ENCODE measurements at regions of chr2 and their contacts with region 1.

Region 1: GRCh38 chr2:219278655-219279516 is at the start of gene DNAJB2:
- DNase-seq: peak; percentile 93 to 97 (median 95)
- ATAC-seq: peak; percentile 86
- H3K4me3 ChIP-seq: peak within 1 kb of the TSS; percentile 34
- H3K27ac ChIP-seq: peak within 1 kb of the TSS; percentile 87
- H3K4me1 ChIP-seq: peaks cover 42 to 59% of the 10 kb centered on the region in 2 experiments
- H3K27me3 ChIP-seq: no peaks in the 10 kb centered on the region
- CTCF ChIP-seq: no peak; a peak in 1 of 6 replicates
- EP300 ChIP-seq: no peak
- POLR2A ChIP-seq: peak; percentile 62
- RAD21 ChIP-seq: 0 out of 4 replicates have a peak, but pooled peaks of 1 of the 2 experiments have one; percentile 12
- polyA plus RNA-seq, gene DNAJB2: 0.08 TPM in 1 of 2 experiments, not detected in the other

Region 2: DNA sequence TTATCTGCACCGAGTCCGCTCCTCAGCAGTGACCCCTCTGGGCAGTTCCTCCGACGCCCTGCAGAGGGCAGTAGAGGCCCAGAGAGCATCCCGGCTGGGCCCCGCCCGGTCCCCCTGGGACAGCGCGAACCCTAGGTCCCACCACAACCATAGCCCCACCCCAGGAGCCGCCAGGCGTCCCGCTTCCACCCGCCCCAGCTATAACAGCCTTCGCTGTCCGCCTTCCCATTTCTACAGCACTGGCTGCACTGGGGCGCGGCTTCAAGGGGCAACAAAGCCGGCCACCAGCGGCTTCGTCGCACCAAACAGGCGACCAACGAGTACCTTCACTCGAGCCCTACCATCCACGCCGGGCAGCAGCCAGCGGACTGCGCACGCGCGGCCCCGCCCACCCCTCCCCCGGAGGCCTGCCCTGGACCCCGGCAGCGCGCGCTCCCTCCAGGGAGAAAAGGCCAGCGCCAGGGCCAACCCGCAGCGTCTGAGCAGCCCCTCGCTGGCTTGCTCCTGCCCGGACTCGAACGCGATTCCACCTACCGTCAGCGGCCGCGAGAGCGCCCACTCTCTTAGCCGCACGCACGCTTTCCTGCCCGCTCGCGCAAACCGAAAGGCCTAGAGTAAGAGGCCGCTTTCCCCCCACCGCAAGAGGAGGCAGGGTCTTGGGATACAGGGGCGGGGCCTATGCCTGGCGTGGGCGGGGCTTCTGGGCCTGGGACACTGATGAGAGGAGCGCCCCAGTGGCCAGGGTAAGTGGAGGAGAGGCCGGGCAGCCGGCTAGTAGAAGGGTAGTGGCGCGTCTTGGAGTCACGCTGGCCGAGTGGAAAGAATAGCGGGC is 118.5 kb before region 1 on chr2 and contains the start of gene NHEJ1:
- CTCF ChIA-PET with region 1: no interaction called
- POLR2A ChIA-PET with region 1: no interaction called
- in situ Hi-C with region 1: no loop called
- intact Hi-C with region 1: loop called (anchors 1 kb)
- DNase-seq: peak; percentile 91 to 95 (median 92)
- ATAC-seq: peak; percentile 98
- H3K4me3 ChIP-seq: peak within 1 kb of the TSS; percentile 55
- H3K27ac ChIP-seq: peak within 1 kb of the TSS; percentile 76
- H3K4me1 ChIP-seq: peaks cover 8 to 16% of the 10 kb centered on the region in 2 experiments; a peak in 4 of 5 replicates
- H3K27me3 ChIP-seq: no peaks in the 10 kb centered on the region
- CTCF ChIP-seq: peak; percentile 76 to 89 (median 89)
- EP300 ChIP-seq: no peak
- POLR2A ChIP-seq: peak; percentile 85
- RAD21 ChIP-seq: peak; percentile 71 to 81
- polyA plus RNA-seq, gene NHEJ1: 16.5 to 23.7 TPM

Region 3: DNA sequence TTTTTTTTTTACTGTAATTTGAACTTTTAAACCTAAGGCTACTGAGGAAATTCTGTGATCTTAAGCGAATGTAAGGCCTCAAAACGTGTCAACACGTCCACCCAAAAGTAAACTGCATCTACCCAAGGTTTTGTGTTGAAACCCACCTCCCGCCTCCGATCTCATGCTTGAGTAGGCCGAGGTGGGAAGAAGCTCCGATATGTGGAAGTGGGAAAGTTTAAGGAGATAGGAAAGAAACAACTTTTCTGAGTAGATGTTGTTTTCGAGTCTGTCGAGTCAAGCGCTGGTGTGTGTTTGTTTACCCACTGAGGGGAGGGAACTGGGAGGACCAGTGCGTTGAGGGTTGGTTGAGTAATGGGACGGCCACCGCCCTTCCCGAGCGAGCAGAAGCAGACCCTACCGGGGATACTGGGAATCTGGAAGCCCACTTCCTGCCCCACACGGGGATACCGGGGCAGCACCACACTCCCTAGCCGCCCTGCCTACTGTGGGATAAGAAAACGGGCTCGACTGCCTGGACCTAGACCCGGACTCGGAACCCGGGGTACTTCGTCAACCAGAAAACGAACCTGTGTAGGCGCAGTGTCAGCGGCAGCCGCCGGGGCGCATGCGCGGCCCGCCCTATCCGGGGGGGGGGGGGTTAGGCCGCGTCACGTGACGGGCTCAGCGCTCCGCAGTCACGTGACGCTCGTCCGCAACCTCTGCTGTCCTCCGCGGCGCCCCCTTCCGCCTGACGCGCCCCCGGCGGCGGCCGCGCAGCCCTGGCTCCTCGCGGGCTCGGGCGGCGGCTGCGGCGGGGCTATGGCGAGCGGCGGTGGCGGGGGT is 101.1 kb before region 1 on chr2 and contains the start of gene RETREG2:
- CTCF ChIA-PET with region 1: no interaction called
- POLR2A ChIA-PET with region 1: interaction called, 5 read pairs
- in situ Hi-C with region 1: no loop called
- intact Hi-C with region 1: loop called (anchors 1 kb)
- DNase-seq: peak; percentile 89 to 96 (median 93)
- ATAC-seq: peak; percentile 86
- H3K4me3 ChIP-seq: peak within 1 kb of the TSS; percentile 80
- H3K27ac ChIP-seq: peak within 1 kb of the TSS; percentile 97
- H3K4me1 ChIP-seq: peaks cover 9 to 25% of the 10 kb centered on the region in 2 experiments; a peak in 4 of 5 replicates
- H3K27me3 ChIP-seq: no peaks in the 10 kb centered on the region
- CTCF ChIP-seq: peak in 2 of 3 experiments; percentile 42 to 49; a peak in 2 of 6 replicates
- EP300 ChIP-seq: peak; percentile 6; the same call in 1 of the 2 replicates
- POLR2A ChIP-seq: peak; percentile 82
- RAD21 ChIP-seq: no peak
- polyA plus RNA-seq, gene RETREG2: 4.9 to 22.6 TPM

Region 4: GRCh38 chr2:219218732-219219701 is 59.9 kb before region 1 on chr2 and contains the start of gene ABCB6:
- CTCF ChIA-PET with region 1: no interaction called
- POLR2A ChIA-PET with region 1: interaction called, 3 read pairs
- in situ Hi-C with region 1: no loop called
- intact Hi-C with region 1: loop called (anchors 1 kb)
- DNase-seq: peak; percentile 82 to 95 (median 90)
- ATAC-seq: peak; percentile 91
- H3K4me3 ChIP-seq: peak within 1 kb of the TSS; percentile 58
- H3K27ac ChIP-seq: peak within 1 kb of the TSS; percentile 89
- H3K4me1 ChIP-seq: peaks cover 13 to 53% of the 10 kb centered on the region in 2 experiments; a peak in 4 of 5 replicates
- H3K27me3 ChIP-seq: no peaks in the 10 kb centered on the region
- CTCF ChIP-seq: no peak
- EP300 ChIP-seq: no peak
- POLR2A ChIP-seq: peak; percentile 84
- RAD21 ChIP-seq: no peak
- polyA plus RNA-seq, gene ABCB6: 3.7 to 8.1 TPM

Region 5: GRCh38 chr2:219253753-219254590 is 24.9 kb before region 1 on chr2 and contains the start of gene TUBA4A:
- CTCF ChIA-PET with region 1: no interaction called
- POLR2A ChIA-PET with region 1: interaction called, 8 read pairs
- in situ Hi-C with region 1: no loop called
- intact Hi-C with region 1: loop called (anchors 2 kb)
- DNase-seq: peak; percentile 87 to 96 (median 95)
- ATAC-seq: peak; percentile 92
- H3K4me3 ChIP-seq: peak within 1 kb of the TSS; percentile 58
- H3K27ac ChIP-seq: peak within 1 kb of the TSS; percentile 75
- H3K4me1 ChIP-seq: peaks cover 18 to 47% of the 10 kb centered on the region in 2 experiments; a peak in 4 of 5 replicates
- H3K27me3 ChIP-seq: 0 out of 5 replicates have a peak, but pooled peaks cover 0 to 4% of the 10 kb centered on the region in 2 experiments
- CTCF ChIP-seq: no peak
- EP300 ChIP-seq: no peak
- POLR2A ChIP-seq: peak; percentile 91
- RAD21 ChIP-seq: no peak
- polyA plus RNA-seq, gene TUBA4A: 31.5 to 60.0 TPM

Region 6: DNA sequence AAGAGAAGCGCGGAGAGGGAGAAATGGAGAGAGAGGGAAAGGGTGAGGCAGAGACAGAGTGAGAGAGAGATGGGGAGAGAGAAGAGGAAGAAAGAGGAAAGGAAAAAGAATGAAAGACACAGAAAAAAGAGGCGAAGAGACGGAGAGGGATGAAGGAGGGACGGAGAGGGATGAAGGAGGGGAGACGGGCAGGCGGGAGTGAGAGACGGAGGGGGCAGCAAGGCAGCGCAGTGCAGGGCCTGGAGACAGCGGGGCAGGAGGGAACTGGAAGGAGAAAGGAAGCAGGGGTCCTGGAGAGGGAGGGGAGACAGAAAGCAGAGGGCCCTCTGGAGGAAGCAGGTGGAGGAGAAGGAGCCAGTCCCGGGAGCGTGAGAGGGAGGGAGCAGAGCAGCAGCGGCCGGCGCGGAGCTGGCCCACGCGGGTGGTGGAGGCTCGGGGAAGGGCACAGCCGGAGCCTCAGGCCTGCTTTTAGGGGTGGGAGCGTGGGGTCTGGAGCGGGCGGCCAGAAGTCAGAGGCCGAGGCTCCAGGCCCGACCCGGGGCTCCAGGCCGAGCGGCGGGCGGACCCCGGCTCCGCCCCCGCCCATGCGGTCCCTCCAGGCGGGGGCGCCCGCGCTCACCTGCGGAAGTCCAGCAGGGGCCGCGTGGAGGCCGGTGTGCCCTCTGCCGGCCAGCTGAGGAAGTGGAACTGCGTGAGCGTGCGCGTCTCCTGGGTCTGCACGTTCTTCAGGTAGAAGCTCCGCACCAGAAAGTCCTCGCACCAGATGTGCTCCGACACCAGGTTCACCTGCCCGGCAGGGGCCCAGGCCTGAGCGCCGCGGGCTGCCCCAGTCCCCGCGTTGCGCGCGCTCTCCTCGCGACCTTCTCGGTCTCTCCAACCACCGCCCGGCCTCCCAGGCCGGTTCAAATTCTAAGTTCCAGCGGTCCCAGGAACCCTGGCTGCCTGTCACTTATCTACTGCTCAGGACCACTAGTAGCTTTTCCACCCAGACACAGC is 15.8 kb after region 1 on chr2:
- CTCF ChIA-PET with region 1: interaction called, 28 read pairs
- POLR2A ChIA-PET with region 1: interaction called, 6 read pairs
- in situ Hi-C with region 1: no loop called
- intact Hi-C with region 1: loop called (anchors 1 kb)
- DNase-seq: peak; percentile 89 to 93 (median 92)
- ATAC-seq: peak; percentile 89
- H3K4me3 ChIP-seq: peak overlapping the region; percentile 36
- H3K27ac ChIP-seq: peak overlapping the region; percentile 76
- H3K4me1 ChIP-seq: peaks cover 22 to 57% of the 10 kb centered on the region in 2 experiments; a peak in 4 of 5 replicates
- H3K27me3 ChIP-seq: peaks cover 0 to 4% of the 10 kb centered on the region in 2 experiments; a peak in 2 of 5 replicates
- CTCF ChIP-seq: peak; percentile 93 to 99 (median 98)
- EP300 ChIP-seq: 0 out of 2 replicates have a peak, but pooled peaks have one; percentile 7
- POLR2A ChIP-seq: peak; percentile 72; the same call in 1 of the 2 replicates
- RAD21 ChIP-seq: peak; percentile 81 to 87

Region 7: DNA sequence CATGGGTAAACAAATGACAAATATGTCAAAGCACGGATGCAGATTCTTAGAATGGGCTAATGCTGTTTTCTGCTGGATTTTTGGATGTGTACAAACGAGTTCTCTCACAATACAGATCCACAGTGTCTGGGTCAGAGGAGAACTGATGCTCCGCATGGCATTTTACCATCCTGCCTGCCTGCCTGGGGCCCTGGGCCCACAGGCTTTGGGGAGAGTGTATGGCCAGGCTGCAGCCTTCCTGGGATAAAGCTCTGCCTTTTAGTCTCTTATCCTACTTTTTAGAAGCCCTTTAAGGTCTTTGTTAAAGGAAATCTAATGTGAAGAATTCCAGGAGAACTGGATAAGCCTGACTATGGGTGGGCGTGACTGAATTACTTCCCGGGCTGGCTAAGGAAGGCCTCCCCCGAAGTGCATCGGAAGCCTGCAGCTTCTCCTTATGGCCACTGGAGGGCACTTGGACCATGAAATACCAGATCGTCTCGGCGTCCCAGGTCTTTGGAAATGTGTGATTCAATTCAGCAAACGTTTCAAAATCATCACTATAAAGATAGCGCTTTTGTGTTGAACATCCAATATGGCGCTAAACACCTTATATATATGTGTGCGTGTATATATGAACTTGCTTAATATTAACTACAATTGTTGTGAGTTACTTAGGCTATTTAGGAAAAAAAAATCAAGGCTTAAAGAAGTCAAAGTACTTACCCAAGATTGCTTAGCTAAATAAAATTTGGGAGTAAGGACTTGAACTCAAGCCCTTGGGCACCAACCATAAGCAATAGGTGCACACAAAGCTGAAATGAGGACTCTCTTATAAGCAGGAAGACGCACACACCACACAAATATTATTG is 124.0 kb after region 1 on chr2:
- CTCF ChIA-PET with region 1: no interaction called
- POLR2A ChIA-PET with region 1: no interaction called
- in situ Hi-C with region 1: no loop called
- intact Hi-C with region 1: no loop called
- DNase-seq: peak; percentile 68 to 81 (median 72)
- ATAC-seq: peak; percentile 83
- H3K4me3 ChIP-seq: no peak overlapping the region
- H3K27ac ChIP-seq: no peak overlapping the region
- H3K4me1 ChIP-seq: peaks cover 17 to 18% of the 10 kb centered on the region in 2 experiments
- H3K27me3 ChIP-seq: no peaks in the 10 kb centered on the region
- CTCF ChIP-seq: peak; percentile 85 to 90 (median 89)
- EP300 ChIP-seq: no peak
- POLR2A ChIP-seq: no peak
- RAD21 ChIP-seq: peak; percentile 78 to 87

Region 8: DNA sequence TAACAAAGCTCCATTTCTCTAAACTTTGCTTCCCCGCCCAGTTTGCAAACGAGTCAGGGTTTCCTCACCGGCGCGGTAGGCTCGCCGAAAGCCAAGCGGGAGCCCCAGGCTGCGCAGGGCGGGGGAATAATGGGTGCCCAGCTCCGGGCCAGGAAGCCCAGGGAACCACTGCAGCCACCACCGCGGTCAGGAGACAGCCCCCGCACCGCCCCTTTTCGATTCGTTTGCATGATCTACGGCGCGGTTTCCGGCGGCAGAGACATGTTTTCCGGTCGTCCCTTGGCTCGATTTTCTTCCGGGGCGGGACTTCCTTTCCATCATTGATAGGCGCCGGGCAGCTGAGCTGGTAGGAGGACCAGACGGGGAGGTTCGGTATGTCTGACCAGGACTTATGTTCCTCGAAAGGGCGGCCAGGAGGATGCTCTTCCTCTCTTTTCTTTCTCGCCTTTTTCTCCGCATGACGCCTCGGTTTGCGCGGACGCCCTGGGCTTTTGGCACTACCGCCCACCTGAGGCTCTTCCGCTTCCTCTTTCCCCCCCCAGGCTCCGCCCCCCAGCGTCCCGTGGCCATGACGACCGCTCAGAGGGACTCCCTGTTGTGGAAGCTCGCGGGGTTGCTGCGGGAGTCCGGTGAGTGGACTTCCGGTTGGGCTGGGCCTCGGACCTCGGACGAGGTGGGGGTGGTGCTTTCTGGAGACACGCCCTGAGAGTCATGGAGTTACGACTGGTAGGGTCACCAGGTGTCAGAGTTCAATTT is 318.8 kb after region 1 on chr2 and contains the start of gene STK11IP:
- CTCF ChIA-PET with region 1: no interaction called
- POLR2A ChIA-PET with region 1: no interaction called
- in situ Hi-C with region 1: no loop called
- intact Hi-C with region 1: loop called (anchors 5 kb)
- DNase-seq: peak; percentile 95 to 97 (median 96)
- ATAC-seq: peak; percentile 94
- H3K4me3 ChIP-seq: peak within 1 kb of the TSS; percentile 53
- H3K27ac ChIP-seq: peak within 1 kb of the TSS; percentile 90
- H3K4me1 ChIP-seq: peaks cover 9 to 20% of the 10 kb centered on the region in 2 experiments
- H3K27me3 ChIP-seq: no peaks in the 10 kb centered on the region
- CTCF ChIP-seq: 0 out of 6 replicates have a peak, but pooled peaks of 1 of the 3 experiments have one; percentile 3
- EP300 ChIP-seq: no peak; the same call in 1 of the 2 replicates
- POLR2A ChIP-seq: peak; percentile 90
- RAD21 ChIP-seq: no peak
- polyA plus RNA-seq, gene STK11IP: 0.52 to 0.89 TPM

Measured in K562 (cell line).